PC-3 (cell line): ENCODE measurements at regions of chr1 and their contacts with region 1.

Region 1: DNA sequence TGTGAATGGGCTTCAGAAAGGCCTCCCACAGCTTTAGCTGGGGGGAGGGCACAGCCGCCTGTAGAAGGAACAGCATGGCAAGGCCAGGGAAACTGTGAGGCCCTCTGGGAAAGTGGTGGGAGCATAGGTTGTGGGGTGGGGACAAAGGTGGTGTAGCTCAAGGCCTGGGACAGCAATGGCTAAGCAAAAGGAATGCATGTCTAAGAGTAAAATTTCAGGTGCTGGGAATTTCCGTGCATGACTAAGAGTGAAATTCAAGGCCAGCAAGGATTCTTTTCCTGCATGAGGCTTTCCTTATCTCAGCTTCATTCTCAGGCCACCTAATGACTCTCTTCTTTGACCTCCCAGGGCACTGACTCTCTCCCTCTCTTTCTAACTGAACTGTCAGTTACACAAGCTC is 86.5 kb upstream of the WNT4 start:
- DNase-seq: peak; percentile 87
- ATAC-seq: peak; percentile 61
- H3K4me3 ChIP-seq: no peak overlapping the region
- H3K27ac ChIP-seq: peak overlapping the region; percentile 97
- H3K4me1 ChIP-seq: peaks cover 27% of the 10 kb centered on the region
- H3K27me3 ChIP-seq: no peaks in the 10 kb centered on the region
- CTCF ChIP-seq: no peak

Region 2: DNA sequence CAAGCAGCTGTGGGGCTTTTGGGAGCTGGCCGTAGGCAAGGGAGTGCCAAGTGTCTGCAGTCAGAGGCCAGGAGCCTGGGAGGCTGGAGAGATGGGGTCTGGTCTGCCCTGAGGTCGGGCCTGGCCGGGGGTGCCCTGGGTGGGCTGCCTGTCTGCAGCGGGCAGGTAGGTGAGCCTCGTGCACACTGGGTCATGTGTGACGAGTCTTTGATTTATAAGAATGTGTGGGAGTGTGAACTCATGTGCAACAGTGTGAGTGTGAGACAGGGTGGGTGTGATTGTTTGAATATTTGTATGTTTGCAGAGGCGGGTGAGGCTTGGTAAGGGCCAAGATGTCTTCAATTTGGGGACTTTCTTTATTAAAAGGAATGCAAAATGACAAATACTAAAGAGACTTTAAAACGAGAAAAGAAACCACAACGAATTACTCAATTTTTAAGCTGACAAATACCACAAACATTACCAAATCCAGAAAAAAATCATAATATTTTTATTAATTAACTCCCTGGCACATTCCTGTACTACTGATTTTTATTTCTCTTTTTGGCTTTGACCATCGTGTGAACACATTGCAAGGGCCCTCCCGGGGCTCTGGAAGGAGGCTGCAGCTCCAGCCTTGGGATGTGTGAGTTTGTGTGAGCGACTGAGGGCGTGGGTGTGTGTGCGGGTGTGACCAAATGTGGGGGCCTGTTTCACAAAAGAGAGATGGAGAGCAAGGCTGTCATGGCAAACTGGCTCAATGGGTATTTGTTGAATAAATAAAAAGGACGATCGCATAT is 23.8 kb after region 1 on chr1:
- CTCF ChIA-PET with region 1: no interaction called
- POLR2A ChIA-PET with region 1: no interaction called
- intact Hi-C with region 1: loop called (anchors 1 kb)
- DNase-seq: no peak
- ATAC-seq: 0 out of 2 replicates have a peak, but pooled peaks have one; percentile 21
- H3K4me3 ChIP-seq: no peak overlapping the region
- H3K27ac ChIP-seq: no peak overlapping the region
- H3K4me1 ChIP-seq: peaks cover 42% of the 10 kb centered on the region
- H3K27me3 ChIP-seq: no peaks in the 10 kb centered on the region
- CTCF ChIP-seq: no peak

Region 3: DNA sequence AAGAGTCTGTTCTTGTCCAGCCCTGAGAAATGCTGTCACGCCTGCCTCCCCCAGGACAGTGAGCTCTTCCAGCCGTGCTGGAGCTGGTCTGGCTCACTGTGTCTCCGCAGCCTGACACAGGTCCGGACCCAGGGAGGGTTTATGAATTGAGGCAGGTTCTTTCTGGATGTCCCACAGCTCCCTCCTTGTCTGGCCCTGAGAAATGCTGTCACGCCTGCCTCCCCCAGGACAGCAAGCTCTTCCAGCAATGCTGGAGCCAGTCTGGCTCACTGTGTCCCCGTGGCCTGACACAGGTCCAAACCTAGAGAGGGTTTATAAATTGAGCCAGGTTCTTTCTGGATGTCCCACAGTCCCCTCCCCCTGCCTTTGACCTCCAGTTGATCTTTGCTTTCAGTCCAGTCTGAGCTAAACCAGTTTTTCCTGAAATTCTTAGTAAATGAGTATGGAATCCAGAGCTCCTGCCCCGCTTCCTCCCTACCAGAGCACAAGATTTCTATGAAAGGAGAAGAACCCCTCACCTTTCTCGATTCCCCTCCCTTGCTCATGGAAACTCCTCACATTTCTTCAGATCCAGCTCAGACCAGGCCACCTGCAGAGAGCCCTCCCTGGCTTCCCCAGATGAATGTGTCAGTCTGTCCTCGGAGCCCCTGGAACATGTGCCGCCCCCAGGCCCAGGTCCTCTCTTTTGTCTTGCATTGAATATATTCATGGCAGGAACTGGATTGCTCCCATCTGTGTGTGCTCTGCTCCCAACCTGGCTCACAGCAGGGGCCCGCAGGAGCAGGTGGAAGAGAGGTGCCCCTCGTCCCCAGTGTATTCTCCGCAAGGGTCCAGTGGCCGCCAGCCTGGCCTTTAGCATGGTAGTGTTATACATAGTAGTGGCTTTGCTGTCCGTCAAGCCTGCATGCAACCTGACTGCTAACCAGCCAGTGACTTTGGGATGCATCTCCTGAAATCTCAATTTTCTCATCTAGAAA is 597.5 kb after region 1 on chr1:
- CTCF ChIA-PET with region 1: no interaction called
- POLR2A ChIA-PET with region 1: no interaction called
- intact Hi-C with region 1: no loop called
- DNase-seq: peak; percentile 86
- ATAC-seq: peak; percentile 48
- H3K4me3 ChIP-seq: peak overlapping the region; percentile 40; the same call in 1 of the 2 replicates
- H3K27ac ChIP-seq: peak overlapping the region; percentile 77
- H3K4me1 ChIP-seq: peaks cover 48% of the 10 kb centered on the region
- H3K27me3 ChIP-seq: no peaks in the 10 kb centered on the region
- CTCF ChIP-seq: no peak